IMR-90 (cell line): ENCODE measurements at regions of chr19 and their contacts with region 1.

Region 1: DNA sequence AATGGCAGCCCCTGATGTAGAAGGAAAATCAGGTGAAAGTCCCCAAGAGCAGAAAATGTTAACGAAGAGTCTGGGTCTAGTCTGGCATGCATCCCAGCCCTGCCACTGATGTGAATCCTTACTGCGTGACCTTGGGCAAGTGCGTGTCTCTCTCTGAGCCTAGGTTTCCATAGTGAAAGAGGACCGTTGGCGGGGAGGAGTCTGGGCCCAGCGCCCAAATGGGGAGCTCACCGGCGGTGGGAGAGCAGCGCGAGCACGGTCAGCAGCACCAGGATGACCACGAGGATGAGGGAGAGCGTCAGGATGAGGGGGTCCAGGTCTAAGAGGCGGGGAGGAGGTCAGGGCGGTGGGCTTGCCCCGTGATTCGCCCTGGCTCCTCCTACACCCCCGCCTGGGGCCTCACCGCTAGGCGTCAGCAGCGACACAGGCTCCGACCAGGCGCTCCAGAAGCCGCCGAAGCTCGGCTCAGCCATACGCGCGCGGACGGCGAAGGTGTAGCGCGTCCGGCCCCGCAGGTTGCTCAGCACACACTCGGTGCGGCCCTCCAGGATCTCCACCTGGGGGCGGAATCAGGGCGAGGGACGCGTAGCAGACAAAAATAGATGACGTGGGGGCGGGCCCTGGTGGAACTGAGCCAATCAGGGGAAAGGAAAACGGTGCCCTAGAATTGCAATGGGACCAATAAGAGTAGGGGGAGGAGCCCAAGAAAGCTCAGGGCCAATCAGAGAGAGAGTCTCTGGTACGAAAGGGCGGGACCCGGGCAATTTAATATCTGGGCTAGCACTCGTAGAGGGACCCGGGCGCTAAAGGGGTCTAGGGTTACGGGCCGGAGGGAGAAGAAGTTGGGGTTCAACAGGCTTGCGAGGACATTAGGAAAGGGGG is 3.2 kb downstream of the EPOR start:
- DNase-seq: peak; percentile 93
- ATAC-seq: peak; percentile 88
- H3K4me3 ChIP-seq: peak overlapping the region; percentile 86
- H3K27ac ChIP-seq: peak overlapping the region; percentile 62
- H3K4me1 ChIP-seq: peaks cover 20% of the 10 kb centered on the region
- H3K27me3 ChIP-seq: no peaks in the 10 kb centered on the region; the same call in 1 of the 2 replicates
- CTCF ChIP-seq: peak; percentile 53
- POLR2A ChIP-seq: peak; percentile 91
- RAD21 ChIP-seq: peak; percentile 43; the same call in 1 of the 2 replicates

Region 2: GRCh38 chr19:11227201-11227886 is 153.6 kb before region 1 on chr19:
- CTCF ChIA-PET with region 1: no interaction called
- POLR2A ChIA-PET with region 1: no interaction called
- dilution Hi-C with region 1: no loop called
- in situ Hi-C with region 1: no loop called
- intact Hi-C with region 1: no loop called
- DNase-seq: no peak
- ATAC-seq: no peak
- H3K4me3 ChIP-seq: no peak overlapping the region
- H3K27ac ChIP-seq: no peak overlapping the region
- H3K4me1 ChIP-seq: no peaks in the 10 kb centered on the region
- H3K27me3 ChIP-seq: no peaks in the 10 kb centered on the region
- CTCF ChIP-seq: no peak
- POLR2A ChIP-seq: no peak
- RAD21 ChIP-seq: no peak

Region 3: GRCh38 chr19:11242864-11243797 is 137.8 kb before region 1 on chr19:
- CTCF ChIA-PET with region 1: no interaction called
- POLR2A ChIA-PET with region 1: no interaction called
- dilution Hi-C with region 1: no loop called
- in situ Hi-C with region 1: no loop called
- intact Hi-C with region 1: no loop called
- DNase-seq: peak; percentile 77
- ATAC-seq: peak; percentile 100
- H3K4me3 ChIP-seq: no peak overlapping the region
- H3K27ac ChIP-seq: no peak overlapping the region
- H3K4me1 ChIP-seq: 0 out of 2 replicates have a peak, but pooled peaks cover 1% of the 10 kb centered on the region
- H3K27me3 ChIP-seq: no peaks in the 10 kb centered on the region
- CTCF ChIP-seq: peak; percentile 54
- POLR2A ChIP-seq: no peak
- RAD21 ChIP-seq: peak; percentile 31

Region 4: DNA sequence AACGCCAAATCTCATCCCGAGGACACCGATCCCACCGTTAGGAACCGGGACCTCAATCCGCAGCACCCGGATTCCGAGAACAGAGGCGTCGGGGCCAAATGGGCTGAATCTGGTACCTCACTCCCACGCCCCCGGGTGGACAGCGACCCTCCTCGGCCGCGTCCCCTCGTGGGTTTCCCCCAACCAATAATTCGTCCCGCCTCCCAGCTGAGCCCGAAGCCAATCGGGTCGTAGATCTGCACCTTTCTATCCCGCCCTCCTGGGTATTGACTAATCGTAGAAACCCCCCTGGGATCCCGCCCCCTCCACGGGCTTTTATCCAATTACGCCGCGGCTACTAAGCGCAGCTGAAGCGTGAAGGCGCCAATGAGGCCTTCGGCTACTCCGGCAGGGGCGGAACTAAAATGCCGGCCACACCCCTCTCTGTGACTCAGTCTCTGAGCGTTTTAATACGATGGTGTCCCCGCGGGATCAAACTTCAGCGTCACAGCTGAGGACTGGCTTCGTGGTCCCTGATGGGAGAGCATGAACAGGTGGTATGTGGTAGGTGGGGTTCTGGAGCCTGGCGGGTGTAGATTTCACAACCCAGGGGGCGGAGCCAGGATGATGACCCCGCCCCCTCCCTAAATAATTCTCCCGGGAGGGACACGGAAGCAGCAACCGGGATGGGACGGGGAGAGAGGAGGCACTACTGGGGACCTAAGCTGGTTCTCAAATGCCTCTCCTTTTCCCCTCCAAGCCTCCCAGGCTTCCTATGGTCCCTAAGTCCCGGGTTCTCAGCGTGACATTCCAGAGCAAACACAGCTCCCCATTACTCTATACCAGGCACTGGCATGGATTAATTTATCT is 34.6 kb before region 1 on chr19 and contains the starts of genes CCDC159 and TMEM205:
- CTCF ChIA-PET with region 1: interaction called, 10 read pairs
- POLR2A ChIA-PET with region 1: no interaction called
- dilution Hi-C with region 1: no loop called
- in situ Hi-C with region 1: no loop called
- intact Hi-C with region 1: no loop called
- DNase-seq: peak; percentile 99
- ATAC-seq: peak; percentile 96
- H3K4me3 ChIP-seq: peak within 1 kb of the TSS; percentile 73
- H3K27ac ChIP-seq: peak within 1 kb of the TSS; percentile 80
- H3K4me1 ChIP-seq: peaks cover 8% of the 10 kb centered on the region
- H3K27me3 ChIP-seq: no peaks in the 10 kb centered on the region
- CTCF ChIP-seq: 0 out of 2 replicates have a peak, but pooled peaks have one; percentile 22
- POLR2A ChIP-seq: peak; percentile 67
- RAD21 ChIP-seq: peak; percentile 17; the same call in 1 of the 2 replicates
- total RNA-seq, gene CCDC159: 4.4 and 4.7 TPM in 2 replicates
- total RNA-seq, gene TMEM205: 87.5 and 136 TPM in 2 replicates

Region 5: DNA sequence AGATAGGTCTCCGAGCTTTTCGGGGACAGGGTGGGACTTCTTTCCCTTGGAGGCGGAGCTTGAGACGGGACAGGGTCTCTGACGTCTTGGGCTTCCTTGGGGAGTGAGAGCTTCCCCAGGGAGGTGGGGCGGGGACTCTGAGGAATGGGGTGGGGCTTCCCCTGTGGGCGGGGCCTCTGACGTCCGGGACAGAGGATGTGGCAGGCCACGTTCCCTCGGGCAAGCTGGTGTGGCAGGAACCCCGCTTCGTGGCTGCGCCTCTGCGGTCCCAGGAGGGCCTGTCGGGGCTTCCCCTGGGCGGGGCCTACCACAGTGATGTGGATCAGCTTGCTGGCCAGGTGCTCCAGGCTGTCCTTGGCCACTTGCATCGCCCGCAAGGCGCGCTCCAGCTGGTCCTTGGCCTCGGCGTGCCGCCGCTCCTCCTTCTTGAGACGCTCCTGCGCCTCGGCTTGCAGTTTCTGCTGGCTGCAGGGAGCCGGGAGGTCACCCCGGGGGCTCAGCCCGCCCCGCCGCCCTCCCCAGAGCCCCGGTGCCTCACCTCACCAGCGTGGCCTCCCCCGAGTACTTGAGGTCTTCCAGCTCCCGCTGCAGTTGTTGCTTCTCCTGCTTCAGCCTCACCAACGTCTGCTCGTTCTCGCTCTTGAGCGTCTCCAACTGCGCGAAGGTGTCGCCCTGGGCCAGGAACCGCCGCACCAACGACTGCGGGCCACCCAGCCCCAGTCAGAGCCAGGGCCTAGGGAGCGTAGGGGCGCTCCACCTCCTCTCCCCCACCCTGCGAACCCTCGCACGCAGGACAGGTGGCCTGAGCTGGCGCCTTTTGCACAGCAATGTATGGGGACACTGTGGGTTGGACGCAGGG is 41.5 kb after region 1 on chr19:
- CTCF ChIA-PET with region 1: interaction called, 4 read pairs
- POLR2A ChIA-PET with region 1: no interaction called
- dilution Hi-C with region 1: no loop called
- in situ Hi-C with region 1: no loop called
- intact Hi-C with region 1: loop called (anchors 5 kb)
- DNase-seq: no peak
- ATAC-seq: peak; percentile 68
- H3K4me3 ChIP-seq: peak overlapping the region; percentile 12; the same call in 1 of the 2 replicates
- H3K27ac ChIP-seq: no peak overlapping the region
- H3K4me1 ChIP-seq: peaks cover 2% of the 10 kb centered on the region; the same call in 1 of the 2 replicates
- H3K27me3 ChIP-seq: peaks cover 44% of the 10 kb centered on the region
- CTCF ChIP-seq: no peak
- POLR2A ChIP-seq: no peak
- RAD21 ChIP-seq: no peak

Region 6: GRCh38 chr19:11482384-11483050 is 101.6 kb after region 1 on chr19:
- CTCF ChIA-PET with region 1: interaction called, 5 read pairs
- POLR2A ChIA-PET with region 1: no interaction called
- dilution Hi-C with region 1: no loop called
- in situ Hi-C with region 1: no loop called
- intact Hi-C with region 1: loop called (anchors 2 kb)
- DNase-seq: peak; percentile 72
- ATAC-seq: peak; percentile 83
- H3K4me3 ChIP-seq: peak overlapping the region; percentile 49
- H3K27ac ChIP-seq: no peak overlapping the region
- H3K4me1 ChIP-seq: peaks cover 2% of the 10 kb centered on the region; the same call in 1 of the 2 replicates
- H3K27me3 ChIP-seq: peaks cover 42% of the 10 kb centered on the region
- CTCF ChIP-seq: peak; percentile 97
- POLR2A ChIP-seq: no peak
- RAD21 ChIP-seq: peak; percentile 81